ENCODE measurements at regions of chr18 and their contacts with region 1.

Region 1: DNA sequence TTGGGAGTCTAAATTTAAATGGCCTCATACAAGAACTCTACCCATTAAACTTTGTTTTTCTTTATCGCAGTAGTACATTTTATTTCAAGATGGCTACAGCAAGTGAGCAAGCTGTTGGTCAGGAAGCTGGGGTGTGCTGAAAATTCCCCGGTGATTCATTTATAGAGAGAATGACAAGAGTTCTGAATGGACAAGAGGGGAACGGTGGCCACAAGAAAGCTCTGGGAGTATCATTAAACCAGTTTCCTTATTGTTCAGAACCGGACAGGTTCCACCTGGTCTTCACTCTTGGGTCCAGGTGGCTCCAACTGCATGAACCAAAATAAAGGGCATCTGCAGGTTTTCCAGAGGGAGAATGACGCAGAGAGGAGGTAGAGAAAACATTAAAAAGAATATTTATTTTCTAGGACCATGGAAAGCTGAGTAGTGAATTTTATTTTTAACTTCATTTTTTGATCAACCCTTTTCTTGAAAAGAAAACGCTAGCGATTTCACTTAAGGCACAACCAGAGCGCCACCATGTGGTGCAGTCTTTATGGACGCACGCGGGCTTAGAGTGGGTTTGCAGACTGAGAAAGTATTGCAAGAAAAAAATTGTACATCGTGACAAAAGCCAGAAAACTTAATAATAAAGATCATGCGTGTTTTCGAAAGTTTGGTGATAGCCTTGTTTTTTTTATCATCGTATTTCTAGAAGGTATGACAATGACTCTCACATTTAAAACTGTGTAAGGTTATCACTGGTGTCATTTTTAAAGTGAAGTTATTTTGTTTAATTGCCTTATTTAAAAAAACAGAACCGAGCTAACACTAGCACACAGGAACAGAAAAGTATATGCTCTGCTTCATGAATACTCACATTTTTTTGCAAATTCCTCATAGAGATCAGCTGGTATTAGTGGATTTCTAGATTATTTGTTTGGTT is 97.9 kb upstream of the NOL4 start:
- DNase-seq: no peak

Region 2: GRCh38 chr18:33839441-33840211 is 483.0 kb before region 1 on chr18:
- intact Hi-C with region 1: loop called (anchors 5 kb)
- DNase-seq: no peak

Measured in cardiac septum (tissue), 1 donor.